Activated CD8-positive, alpha-beta memory T cell treated with anti-CD3 and anti-CD28 coated beads, Interleukin-2, amount 10 ng/mL, durations not matched to agents 7 days and 5 days (primary cell): ENCODE measurements at regions of chrX and their contacts with region 1.

Region 1: GRCh38 chrX:24024819-24025740 is 1.9 kb downstream of the KLHL15 start:
- DNase-seq: peak; percentile 92
- ATAC-seq: peak; percentile 91
- H3K4me3 Mint-ChIP-seq: peak overlapping the region; percentile 86
- H3K27ac Mint-ChIP-seq: peak overlapping the region; percentile 90
- H3K4me1 Mint-ChIP-seq: peaks cover 25% of the 10 kb centered on the region
- H3K27me3 Mint-ChIP-seq: peaks cover 5% of the 10 kb centered on the region

Region 2: DNA sequence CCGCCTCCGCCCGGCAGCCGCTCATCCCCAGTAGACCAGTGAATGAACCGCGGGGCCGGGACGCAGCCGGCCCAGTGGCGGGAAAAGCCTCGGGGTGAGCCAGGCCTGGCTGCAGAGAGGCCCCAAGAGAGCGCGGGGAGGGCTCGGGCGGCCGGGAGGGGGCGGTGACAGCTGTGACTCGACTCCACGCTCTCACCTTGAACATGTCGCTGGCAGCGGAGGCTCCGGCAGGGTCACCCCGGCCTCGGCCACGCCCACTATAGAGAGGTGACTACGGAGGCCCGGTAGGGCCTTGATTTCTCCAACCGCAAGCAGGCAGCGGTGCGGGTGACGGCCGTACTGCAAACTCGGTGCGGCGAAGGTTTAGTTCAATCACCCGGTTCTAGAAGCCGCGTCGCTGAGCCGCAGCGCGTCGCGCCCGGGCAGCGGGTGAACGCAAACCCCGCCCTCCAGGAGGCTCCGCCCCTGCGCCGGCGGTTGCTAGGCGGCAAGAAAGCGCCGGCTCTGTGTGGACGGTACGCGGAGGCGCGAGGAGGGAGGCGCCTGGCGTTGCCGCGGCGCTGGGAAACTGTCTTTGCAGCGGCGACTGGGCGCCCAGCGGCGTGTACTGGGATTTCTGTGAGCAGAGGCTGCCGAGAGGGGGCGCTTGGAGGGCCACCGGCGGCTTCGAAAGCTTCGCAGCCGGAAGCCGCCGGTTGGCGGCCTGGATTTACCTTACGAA is 117.4 kb before region 1 on chrX and contains the starts of genes APOO and CXorf58:
- CTCF ChIA-PET with region 1: interaction called, 12 read pairs
- DNase-seq: peak; percentile 94
- ATAC-seq: peak; percentile 96
- H3K4me3 Mint-ChIP-seq: peak within 1 kb of the TSS; percentile 75
- H3K27ac Mint-ChIP-seq: peak within 1 kb of the TSS; percentile 87
- H3K4me1 Mint-ChIP-seq: peaks cover 26% of the 10 kb centered on the region
- H3K27me3 Mint-ChIP-seq: no peaks in the 10 kb centered on the region
- total RNA-seq, gene APOO: 27.1 to 27.5 TPM
- total RNA-seq, gene CXorf58: 0.20 TPM in 1 of 2 experiments, not detected in the other

Region 3: DNA sequence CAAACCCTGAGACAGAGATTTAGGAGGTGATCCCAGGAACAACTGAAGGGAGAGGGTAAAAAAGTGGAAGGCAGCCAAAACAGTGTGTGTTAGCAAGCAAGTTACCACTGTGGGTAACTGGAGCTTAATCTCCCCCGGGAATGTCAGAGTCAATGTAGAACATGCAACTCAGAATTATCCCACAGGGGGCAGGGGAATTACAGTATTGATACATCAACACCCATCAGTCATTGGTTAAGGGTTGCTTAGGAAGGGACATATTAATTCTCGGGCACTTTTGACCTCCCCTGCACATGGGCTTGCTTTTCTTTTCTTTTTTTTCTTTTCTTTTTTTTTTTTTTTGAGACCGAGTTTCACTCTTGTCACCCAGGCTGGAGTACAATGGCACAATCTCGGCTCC is 88.0 kb before region 1 on chrX:
- CTCF ChIA-PET with region 1: no interaction called
- DNase-seq: no peak
- ATAC-seq: no peak
- H3K4me3 Mint-ChIP-seq: no peak overlapping the region
- H3K27ac Mint-ChIP-seq: no peak overlapping the region
- H3K4me1 Mint-ChIP-seq: peaks cover 2% of the 10 kb centered on the region
- H3K27me3 Mint-ChIP-seq: no peaks in the 10 kb centered on the region